ENCODE measurements at regions of chr1 and their contacts with region 1.

Region 1: DNA sequence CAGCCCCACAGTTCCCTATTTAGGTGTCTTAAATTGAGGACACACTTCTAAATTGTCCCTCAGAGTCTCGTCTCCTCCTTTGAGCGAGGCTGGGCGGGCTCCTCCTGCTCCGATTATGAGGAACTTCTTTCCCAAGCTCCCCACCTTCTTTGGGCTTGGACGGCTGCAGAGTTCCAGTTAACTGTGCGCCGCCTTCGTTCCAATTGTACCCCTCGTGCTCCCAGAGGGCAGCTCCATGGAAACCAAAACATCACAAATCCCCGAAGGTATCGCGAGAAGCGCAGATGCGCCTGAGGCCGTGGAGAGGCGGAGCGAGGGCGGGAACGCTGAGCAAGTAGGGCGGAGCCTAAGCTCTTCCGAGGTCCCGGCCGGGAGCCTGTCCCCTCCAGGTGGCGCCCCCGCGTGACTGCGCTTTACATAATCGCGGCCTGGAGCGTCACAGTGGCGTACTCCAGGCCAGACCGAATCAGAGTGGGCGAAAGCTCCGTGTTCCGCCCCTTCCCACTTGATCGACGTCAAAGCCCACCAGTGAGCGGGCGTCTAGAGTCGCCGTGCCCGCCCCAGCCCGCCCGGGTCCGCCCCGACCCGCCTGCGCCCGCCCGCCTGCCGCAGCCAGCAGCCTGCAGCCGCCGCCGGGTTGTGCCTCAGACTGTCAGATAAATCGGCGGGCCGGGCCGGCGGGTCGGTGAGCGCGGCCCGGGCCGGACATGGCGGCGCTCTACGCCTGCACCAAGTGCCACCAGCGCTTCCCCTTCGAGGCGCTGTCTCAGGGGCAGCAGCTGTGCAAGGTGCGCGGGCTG is at the start of gene FAM76A:
- H3K4me3 ChIP-seq: peak within 1 kb of the TSS; percentile 73
- H3K27ac ChIP-seq: peak within 1 kb of the TSS; percentile 77
- H3K4me1 ChIP-seq: peaks cover 7% of the 10 kb centered on the region
- CTCF ChIP-seq: peak; percentile 98

Region 2: DNA sequence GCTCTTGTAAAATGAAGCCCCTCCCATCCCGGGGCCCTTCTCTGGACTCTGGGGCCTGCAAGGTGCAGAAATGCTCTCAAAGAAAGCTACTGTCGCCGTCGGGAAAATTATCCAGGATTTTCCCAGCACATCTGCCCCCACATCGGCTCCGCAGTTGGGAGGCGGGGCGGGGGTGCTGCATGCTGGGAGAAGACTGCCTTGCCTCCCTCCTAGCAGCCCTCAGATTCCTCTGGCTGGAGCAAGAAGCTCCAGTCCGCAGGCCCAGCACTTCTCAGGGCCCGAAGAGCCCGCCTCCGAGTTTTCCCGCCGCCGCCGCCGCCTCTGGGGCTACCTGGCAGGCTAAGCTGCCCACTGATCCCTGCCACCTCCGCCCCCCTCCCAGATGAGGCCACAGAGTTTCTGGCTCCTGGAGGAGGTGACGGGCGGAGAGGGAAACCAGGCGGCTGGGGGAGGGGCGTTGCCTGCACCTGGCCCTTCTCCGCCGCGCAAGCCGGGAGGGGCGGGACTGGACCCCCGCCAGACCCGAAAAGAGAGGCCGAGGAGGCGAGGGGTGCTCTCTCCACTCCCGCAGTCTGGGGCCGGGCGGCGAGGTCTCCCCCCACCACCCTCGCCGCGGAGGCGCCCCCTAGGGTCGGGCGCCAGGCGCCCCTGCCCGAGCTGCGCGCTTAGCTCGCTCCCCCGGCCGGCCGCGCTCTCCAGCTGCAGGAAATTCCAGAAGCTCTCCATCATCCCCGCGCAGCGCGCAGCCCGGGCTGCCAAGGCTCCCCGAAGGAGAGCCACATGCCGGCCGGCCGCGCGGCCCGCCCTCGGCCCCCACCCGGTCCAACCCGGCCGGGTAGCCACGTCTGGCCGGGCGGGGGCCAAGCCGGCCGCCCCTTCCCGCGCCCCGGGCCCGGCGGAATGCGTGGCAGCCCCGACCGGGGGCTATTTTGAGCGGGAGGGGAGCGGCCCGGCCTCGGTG is 150.4 kb before region 1 on chr1:
- CTCF ChIA-PET with region 1: no interaction called
- POLR2A ChIA-PET with region 1: no interaction called
- H3K4me3 ChIP-seq: peak overlapping the region; percentile 36
- H3K27ac ChIP-seq: peak overlapping the region; percentile 53
- H3K4me1 ChIP-seq: peaks cover 9% of the 10 kb centered on the region
- CTCF ChIP-seq: peak; percentile 93

Region 3: DNA sequence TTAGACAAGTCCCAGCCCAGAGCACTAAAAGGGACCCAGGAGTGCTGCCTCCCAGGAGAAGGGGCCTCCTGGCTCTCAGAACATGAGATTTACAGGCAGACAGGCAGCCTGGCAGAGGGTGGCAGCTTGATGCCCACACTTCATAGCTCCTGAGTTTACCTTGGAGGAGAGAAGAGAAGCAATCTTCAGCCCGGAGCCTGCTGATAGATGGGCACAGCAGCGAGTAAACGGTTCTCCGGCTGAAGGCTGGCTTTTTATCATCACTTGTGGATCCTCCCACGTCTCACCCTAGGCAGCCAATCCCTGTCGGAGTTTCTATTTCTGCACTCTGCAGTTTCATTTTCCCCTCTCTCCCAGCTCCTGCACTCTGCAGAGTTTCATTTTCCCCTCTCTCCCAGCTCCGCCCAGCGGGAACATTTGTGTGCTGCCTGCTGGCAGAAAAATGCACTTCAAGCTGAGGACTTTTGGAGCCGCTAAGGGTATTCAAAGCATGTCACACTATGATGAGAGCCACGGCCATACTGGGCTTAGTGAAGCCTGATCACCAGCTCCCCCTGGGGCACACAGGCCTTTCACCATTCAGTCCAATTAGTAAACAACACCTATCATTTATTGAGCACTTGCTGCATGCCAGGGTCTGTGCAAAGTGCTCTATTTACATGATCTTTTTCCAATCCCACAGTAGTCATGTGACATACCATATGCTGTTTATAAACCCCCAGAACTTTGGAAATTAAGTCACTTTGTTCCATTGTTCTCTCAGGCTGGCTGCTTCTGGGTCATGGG is 53.4 kb before region 1 on chr1 and contains the start of gene IFI6:
- CTCF ChIA-PET with region 1: interaction called, 20 read pairs
- POLR2A ChIA-PET with region 1: interaction called, 31 read pairs
- H3K4me3 ChIP-seq: peak within 1 kb of the TSS; percentile 39
- H3K27ac ChIP-seq: peak within 1 kb of the TSS; percentile 57
- H3K4me1 ChIP-seq: no peaks in the 10 kb centered on the region
- CTCF ChIP-seq: peak; percentile 77

Region 4: GRCh38 chr1:27830621-27831424 is 105.2 kb after region 1 on chr1 and contains the start of gene PPP1R8:
- CTCF ChIA-PET with region 1: interaction called, 4 read pairs
- POLR2A ChIA-PET with region 1: interaction called, 14 read pairs
- H3K4me3 ChIP-seq: peak within 1 kb of the TSS; percentile 86
- H3K27ac ChIP-seq: peak within 1 kb of the TSS; percentile 70
- H3K4me1 ChIP-seq: 0 out of 2 replicates have a peak, but pooled peaks cover 2% of the 10 kb centered on the region
- CTCF ChIP-seq: no peak

Region 5: DNA sequence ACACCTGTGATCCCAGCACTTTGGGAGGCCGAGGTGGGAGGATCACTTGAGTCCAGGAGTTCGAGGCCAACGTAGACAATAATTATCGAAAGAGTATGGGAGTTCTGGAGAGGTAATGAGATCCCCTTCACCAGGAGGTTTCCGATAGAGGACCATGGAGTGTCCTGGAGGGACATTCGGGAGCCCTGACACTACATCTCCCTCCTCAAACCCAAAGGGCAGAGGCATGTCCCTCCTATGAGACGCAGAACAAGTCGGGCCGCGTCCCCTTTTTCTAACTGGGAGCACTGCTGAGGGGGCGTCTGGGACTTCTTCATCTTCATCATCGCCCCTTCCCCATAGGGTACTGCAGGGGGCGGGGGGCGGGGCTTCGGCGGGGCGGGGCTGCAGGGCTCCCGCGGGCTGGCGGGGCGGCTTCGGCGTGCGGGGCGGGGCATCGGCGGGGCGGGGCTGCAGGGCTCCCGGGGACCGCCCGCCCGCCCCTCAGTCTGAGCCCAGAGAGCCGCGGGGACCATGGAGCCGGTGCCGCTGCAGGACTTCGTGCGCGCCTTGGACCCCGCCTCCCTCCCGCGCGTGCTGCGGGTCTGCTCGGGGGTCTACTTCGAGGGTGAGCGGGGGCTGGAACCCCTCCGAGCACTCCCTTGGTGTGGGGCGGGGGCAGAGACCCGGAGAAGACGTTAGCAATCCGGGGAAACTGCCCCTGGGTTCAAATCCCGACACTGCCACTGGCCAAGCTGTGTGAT is 146.7 kb after region 1 on chr1 and contains the start of gene THEMIS2:
- CTCF ChIA-PET with region 1: no interaction called
- POLR2A ChIA-PET with region 1: no interaction called
- H3K4me3 ChIP-seq: peak within 1 kb of the TSS; percentile 23
- H3K27ac ChIP-seq: no peak within 1 kb of the TSS
- H3K4me1 ChIP-seq: peaks cover 3% of the 10 kb centered on the region; the same call in 1 of the 2 replicates
- CTCF ChIP-seq: no peak

Measured in HEK293 (cell line).